Dorsolateral prefrontal cortex (tissue), 120 donors: ENCODE measurements at regions of chr16 and their contacts with region 1.

Region 1: GRCh38 chr16:6725634-6726331 is 606.9 kb upstream of the RBFOX1 start:
- DNase-seq: no peak
- H3K4me3 ChIP-seq: peak overlapping the region in 5 of 59 donors; percentile 1 to 34 (median 10)
- H3K27ac ChIP-seq: peak overlapping the region in 20 of 59 donors; percentile 1 to 72 (median 36)
- H3K27me3 ChIP-seq: no peaks in the 10 kb centered on the region
- CTCF ChIP-seq: peak in 49 of 56 donors; percentile 16 to 64 (median 39)

Region 2: GRCh38 chr16:6751191-6751590 is 25.4 kb after region 1 on chr16:
- intact Hi-C with region 1: no loop called
- DNase-seq: no peak
- H3K4me3 ChIP-seq: no peak overlapping the region
- H3K27ac ChIP-seq: no peak overlapping the region
- H3K27me3 ChIP-seq: no peaks in the 10 kb centered on the region
- CTCF ChIP-seq: no peak

Region 3: GRCh38 chr16:6803176-6803575 is 77.4 kb after region 1 on chr16:
- intact Hi-C with region 1: loop called in 1 of 2 experiments (anchors 10 kb)
- DNase-seq: peak in 1 of 10 donors; percentile 11
- H3K4me3 ChIP-seq: no peak overlapping the region
- H3K27ac ChIP-seq: peak overlapping the region in 27 of 59 donors; percentile 1 to 74 (median 42)
- H3K27me3 ChIP-seq: no peaks in the 10 kb centered on the region
- CTCF ChIP-seq: no peak

Region 4: DNA sequence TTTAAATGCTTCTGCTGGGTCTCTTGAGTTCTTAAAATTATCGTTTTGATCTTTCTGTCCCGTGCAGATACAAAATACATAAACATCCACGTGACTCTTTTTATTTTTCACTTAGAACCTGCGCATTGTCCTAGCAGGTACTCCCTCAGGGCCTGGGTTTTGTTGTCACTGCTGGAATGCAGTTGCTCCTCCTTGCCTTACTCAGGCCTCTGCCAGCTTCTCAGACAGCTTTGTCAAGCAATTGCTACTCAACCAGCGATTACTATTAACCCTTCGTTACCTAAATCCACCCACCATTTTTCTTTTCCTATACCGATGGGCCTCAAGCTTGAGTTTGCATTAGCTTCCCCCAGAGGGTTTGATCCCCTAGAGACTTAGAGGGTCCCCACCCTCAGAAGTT is 201.0 kb after region 1 on chr16:
- intact Hi-C with region 1: no loop called
- DNase-seq: no peak
- H3K4me3 ChIP-seq: no peak overlapping the region
- H3K27ac ChIP-seq: no peak overlapping the region
- H3K27me3 ChIP-seq: no peaks in the 10 kb centered on the region
- CTCF ChIP-seq: no peak